Mammary epithelial cell (primary cell): ENCODE measurements at regions of chr2 and their contacts with region 1.

Region 1: GRCh38 chr2:168030862-168031624 is 216.4 kb downstream of the STK39 start:
- DNase-seq: peak; percentile 60
- H3K4me3 ChIP-seq: no peak overlapping the region
- H3K27ac ChIP-seq: no peak overlapping the region
- H3K4me1 ChIP-seq: peaks cover 11% of the 10 kb centered on the region
- H3K27me3 ChIP-seq: no peaks in the 10 kb centered on the region
- CTCF ChIP-seq: no peak

Region 2: GRCh38 chr2:167492486-167492885 is 538.6 kb before region 1 on chr2:
- CTCF ChIA-PET with region 1: no interaction called
- dilution Hi-C with region 1: no loop called
- in situ Hi-C with region 1: no loop called
- intact Hi-C with region 1: no loop called
- DNase-seq: no peak
- H3K4me3 ChIP-seq: no peak overlapping the region
- H3K27ac ChIP-seq: no peak overlapping the region
- H3K4me1 ChIP-seq: no peaks in the 10 kb centered on the region
- H3K27me3 ChIP-seq: no peaks in the 10 kb centered on the region
- CTCF ChIP-seq: no peak

Region 3: DNA sequence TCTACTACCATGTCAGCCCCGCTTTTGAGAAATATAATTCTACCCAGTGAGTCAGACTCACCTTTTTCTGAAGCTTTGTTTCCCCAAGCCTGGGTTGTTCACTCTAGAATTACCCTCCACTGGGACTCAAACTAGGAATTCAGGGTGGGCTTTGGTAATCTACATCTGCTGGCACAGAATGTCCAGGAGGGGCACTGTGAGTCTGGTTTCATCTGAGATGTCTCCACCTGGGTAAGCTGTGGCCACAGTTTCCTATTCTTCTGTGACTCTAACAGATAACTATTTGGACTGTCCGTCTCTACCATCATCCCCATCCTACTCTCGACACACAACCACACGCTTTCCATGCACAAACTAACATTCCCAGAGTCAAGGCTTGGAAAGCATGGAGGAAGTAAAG is 240.9 kb before region 1 on chr2:
- CTCF ChIA-PET with region 1: no interaction called
- dilution Hi-C with region 1: no loop called
- in situ Hi-C with region 1: no loop called
- intact Hi-C with region 1: no loop called
- DNase-seq: no peak
- H3K4me3 ChIP-seq: no peak overlapping the region
- H3K27ac ChIP-seq: no peak overlapping the region
- H3K4me1 ChIP-seq: no peaks in the 10 kb centered on the region
- H3K27me3 ChIP-seq: no peaks in the 10 kb centered on the region
- CTCF ChIP-seq: no peak

Region 4: GRCh38 chr2:168084327-168084726 is 53.3 kb after region 1 on chr2:
- CTCF ChIA-PET with region 1: no interaction called
- dilution Hi-C with region 1: loop called (anchors 5 kb)
- in situ Hi-C with region 1: no loop called
- intact Hi-C with region 1: no loop called
- DNase-seq: no peak
- H3K4me3 ChIP-seq: no peak overlapping the region
- H3K27ac ChIP-seq: no peak overlapping the region
- H3K4me1 ChIP-seq: no peaks in the 10 kb centered on the region
- H3K27me3 ChIP-seq: no peaks in the 10 kb centered on the region
- CTCF ChIP-seq: no peak